Dorsolateral prefrontal cortex (tissue), 120 donors: ENCODE measurements at regions of chr20 and their contacts with region 1.

Region 1: GRCh38 chr20:9699181-9699580 is 139.7 kb downstream of the PAK5 start:
- DNase-seq: no peak
- H3K4me3 ChIP-seq: no peak overlapping the region
- H3K27ac ChIP-seq: no peak overlapping the region
- H3K27me3 ChIP-seq: no peaks in the 10 kb centered on the region
- CTCF ChIP-seq: no peak

Region 2: DNA sequence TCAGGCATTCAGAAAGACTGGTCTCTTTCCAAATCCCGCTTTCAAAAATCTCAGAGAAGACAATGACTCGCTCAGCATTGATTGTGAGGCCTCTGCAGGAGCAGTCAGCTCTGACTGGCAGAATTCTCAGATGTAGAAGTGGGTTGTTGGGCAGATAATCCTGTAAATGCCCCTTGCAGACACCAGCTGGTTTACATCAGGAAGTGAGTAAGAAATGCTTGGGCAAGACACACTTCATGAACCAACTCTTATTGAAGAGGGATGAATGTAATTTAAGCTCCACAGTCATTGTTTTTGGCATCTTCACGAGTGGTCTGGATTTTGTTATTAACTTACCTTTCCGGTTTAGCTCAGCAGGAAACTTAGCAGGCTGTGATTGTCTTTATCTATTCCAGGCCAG is 463.7 kb before region 1 on chr20:
- intact Hi-C with region 1: no loop called
- DNase-seq: no peak
- H3K4me3 ChIP-seq: no peak overlapping the region
- H3K27ac ChIP-seq: no peak overlapping the region
- H3K27me3 ChIP-seq: no peaks in the 10 kb centered on the region
- CTCF ChIP-seq: no peak

Region 3: GRCh38 chr20:9647741-9648140 is 51.4 kb before region 1 on chr20:
- intact Hi-C with region 1: loop called in 1 of 2 experiments (anchors 10 kb)
- DNase-seq: peak in 1 of 10 donors; percentile 40
- H3K4me3 ChIP-seq: no peak overlapping the region
- H3K27ac ChIP-seq: peak overlapping the region in 16 of 59 donors; percentile 1 to 57 (median 26)
- H3K27me3 ChIP-seq: no peaks in the 10 kb centered on the region
- CTCF ChIP-seq: no peak

Region 4: DNA sequence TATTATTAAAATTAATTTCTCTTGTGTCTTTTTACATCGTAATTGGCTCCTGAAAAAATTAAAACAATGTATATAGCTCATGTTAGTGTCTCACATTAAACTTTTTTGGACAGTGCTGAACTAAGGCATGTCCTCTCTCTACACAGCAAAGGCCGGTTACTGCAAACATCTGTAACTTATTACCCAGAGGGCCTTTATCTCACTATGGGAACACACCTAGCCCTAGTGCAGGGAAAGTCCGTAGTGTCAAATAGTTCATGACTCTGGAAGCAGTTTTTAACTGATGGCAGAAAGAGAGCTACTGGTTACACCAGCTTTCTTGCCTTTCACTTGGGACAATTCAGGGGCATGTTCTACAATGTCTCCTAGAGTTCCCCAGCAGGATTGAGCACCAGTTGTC is 57.5 kb after region 1 on chr20:
- intact Hi-C with region 1: loop called in 1 of 2 experiments (anchors 5 kb)
- DNase-seq: no peak
- H3K4me3 ChIP-seq: no peak overlapping the region
- H3K27ac ChIP-seq: no peak overlapping the region
- H3K27me3 ChIP-seq: no peaks in the 10 kb centered on the region
- CTCF ChIP-seq: no peak

Region 5: DNA sequence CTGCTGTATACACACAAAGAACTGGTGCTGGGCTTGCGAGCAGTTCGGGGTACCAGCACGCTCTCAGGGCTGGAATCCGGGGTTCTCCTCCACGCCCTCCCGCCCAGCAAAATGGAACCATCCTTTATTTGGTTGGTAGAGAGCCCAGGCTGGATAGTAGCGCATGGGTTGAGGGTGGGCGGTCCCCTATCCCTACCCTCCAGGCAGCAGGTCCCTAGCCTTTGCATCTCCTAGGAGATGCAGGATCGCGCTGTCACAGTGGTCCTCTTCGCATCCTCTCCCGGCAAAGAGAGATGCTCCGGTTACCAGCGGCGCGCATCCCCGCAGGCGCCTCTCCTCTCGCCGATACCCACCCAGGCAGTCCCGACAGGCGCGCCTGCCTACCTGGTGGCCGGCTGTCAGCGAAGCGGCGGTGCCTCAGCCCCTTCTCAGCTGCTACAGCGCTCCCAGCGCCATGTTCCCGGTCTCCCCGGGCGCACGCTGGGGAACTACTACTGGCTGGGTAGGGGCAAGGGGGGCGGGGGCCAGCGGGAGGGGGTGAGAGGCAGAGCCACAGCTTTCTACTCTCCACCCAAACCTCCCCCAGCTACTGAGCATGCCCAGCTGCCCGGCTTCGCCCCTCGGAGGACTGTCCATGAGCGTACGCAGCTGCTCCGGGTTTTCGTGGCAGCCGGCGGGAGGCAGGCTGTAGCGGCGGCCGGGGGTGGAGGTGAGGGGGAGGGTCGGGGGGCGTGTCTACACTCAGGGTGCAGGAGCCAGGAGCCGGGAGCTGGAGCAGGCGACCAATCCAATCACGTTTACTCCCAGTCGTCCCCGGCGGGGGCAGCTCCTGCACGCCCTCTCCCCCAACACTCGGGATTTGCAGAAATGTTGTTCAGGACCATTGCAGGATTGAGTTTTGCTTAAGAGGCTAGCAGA is 139.5 kb after region 1 on chr20 and contains the start of gene PAK5:
- intact Hi-C with region 1: loop called in 1 of 2 experiments (anchors 10 kb)
- DNase-seq: peak; percentile 64 to 93 (median 87)
- H3K4me3 ChIP-seq: peak within 1 kb of the TSS; percentile 45 to 88 (median 70)
- H3K27ac ChIP-seq: peak within 1 kb of the TSS in 55 of 59 donors; percentile 21 to 87 (median 76)
- H3K27me3 ChIP-seq: peaks cover 0 to 3% (median 0%) of the 10 kb centered on the region in 45 donors
- CTCF ChIP-seq: peak in 3 of 56 donors; percentile 8 to 22 (median 18)
- total RNA-seq, gene PAK5: 8.4 to 31.5 (median 20.5) TPM